ENCODE measurements at regions of chr19 and their contacts with region 1.

Region 1: GRCh38 chr19:18058208-18059030 is 28.3 kb downstream of the IL12RB1 start:
- DNase-seq: peak; percentile 93
- ATAC-seq: peak; percentile 88

Region 2: GRCh38 chr19:17775245-17775916 is 283.0 kb before region 1 on chr19:
- intact Hi-C with region 1: no loop called
- DNase-seq: no peak
- ATAC-seq: no peak

Region 3: DNA sequence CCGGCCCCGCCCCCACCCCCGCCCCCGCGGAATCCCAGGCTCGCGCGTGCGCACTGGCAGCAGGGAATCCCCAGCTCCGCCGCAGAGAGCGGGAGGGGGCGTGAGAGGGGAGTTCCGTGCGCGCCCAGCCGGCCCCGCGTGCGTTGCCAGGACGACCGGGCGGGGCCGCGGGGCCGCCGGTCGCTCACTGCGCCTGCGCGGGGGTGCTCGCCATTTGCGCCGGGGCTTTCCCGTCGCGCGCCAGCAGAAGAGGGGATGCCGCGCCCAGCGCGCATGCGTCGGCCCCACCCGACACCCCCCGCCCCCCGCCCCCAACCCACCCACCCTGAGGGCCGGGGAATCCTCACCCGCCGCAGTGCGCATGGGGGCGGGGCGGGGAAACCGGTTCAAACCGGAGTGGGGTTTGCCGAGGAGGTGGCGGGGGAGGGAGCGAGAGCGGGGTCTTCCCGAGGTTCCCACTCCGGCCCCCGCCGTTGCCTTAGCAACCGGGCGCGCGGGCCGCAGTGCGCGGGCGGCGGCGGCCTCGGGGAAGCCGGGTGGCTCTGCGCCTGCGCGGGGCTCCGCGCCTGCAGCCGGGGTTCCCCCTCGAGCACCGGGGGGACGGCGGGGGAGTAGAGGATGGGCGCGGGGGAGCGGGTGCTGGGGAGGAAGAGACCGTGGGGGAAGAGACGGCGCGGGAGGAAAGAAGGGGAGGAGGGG is 110.5 kb before region 1 on chr19:
- intact Hi-C with region 1: loop called (anchors 10 kb)
- DNase-seq: peak; percentile 94
- ATAC-seq: peak; percentile 88

Region 4: DNA sequence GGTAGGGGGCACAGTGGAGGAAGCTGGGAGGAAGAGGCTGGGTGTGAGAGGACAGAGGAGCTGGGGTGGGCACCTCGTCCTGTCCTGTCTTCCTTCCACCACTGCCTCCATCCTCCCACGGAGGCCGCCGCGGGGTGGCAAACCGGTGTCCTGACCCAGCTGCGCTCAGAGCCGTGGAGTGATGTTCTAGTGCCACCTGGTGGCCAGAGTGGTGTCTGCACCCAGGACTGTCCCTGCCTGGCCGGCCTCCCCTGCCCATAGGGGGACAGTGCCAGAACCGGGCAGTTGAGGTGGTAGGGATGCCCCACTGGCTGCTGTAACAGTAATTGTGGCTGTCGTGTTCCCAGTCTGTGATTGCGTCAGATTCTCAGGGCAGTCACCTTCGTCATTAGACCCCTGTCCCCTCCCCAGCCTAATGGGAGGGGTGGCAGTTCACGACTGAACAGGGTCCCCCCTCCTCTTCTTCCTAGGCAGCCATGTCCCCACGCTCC is 61.5 kb before region 1 on chr19:
- intact Hi-C with region 1: no loop called
- DNase-seq: peak; percentile 91
- ATAC-seq: peak; percentile 85

Region 5: DNA sequence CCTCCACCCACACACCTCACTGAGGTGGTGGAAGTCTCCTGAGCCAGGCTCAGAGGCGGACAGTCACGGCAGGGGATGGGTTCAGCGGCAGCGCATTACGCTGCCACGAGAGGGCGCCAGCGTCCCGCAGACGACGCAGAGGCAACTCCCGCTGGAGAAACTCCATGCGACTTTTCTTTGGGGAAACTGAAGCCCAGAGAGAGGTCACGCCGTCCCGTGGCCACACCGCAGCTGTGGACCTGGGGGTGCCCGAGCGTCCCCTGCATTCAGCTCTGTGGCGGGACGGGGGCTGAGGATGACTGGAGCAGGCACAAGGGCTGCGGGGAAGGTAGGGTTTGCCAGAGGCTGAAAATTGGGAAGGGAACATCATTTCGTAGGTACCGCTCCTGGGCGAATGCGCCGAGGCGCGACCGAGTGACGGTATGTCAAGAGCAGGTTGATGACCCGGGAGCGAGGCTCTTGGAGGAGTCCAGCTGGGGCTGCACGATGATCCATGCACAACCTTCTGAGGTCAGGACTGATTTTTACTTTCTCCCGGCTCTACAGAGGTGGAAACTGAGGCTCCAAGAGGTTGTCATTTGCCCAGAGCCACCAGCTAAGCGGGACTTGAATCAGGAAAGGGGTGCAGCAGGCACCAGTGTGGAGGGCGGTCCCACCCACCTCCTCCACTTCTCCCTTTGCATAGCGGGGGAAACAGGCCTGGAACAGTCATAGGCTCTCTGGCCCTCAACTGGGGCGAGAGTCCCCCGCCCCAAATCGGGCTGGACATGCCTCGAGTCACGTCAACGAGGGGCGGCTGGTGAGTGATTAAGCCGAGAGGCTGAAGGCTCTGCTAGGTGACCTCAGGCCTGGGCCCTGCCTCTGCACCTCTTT is 51.1 kb before region 1 on chr19:
- intact Hi-C with region 1: loop called (anchors 1 kb)
- DNase-seq: peak; percentile 92
- ATAC-seq: peak; percentile 87

Measured in Right ventricle myocardium inferior (tissue), 1 donor.